ENCODE measurements at regions of chr17 and their contacts with region 1.

Region 1: GRCh38 chr17:45098869-45099616 is 33.3 kb downstream of the PLCD3 start:
- DNase-seq: peak; percentile 86 to 96 (median 95)
- ATAC-seq: peak; percentile 77 to 84
- H3K4me3 ChIP-seq: no peak overlapping the region
- H3K27ac ChIP-seq: no peak overlapping the region
- H3K4me1 ChIP-seq: peaks cover 4% of the 10 kb centered on the region
- H3K27me3 ChIP-seq: no peaks in the 10 kb centered on the region

Region 2: GRCh38 chr17:45031231-45032173 is 67.5 kb before region 1 on chr17:
- intact Hi-C with region 1: no loop called
- DNase-seq: no peak
- ATAC-seq: peak in 1 of 2 donors; percentile 23
- H3K4me3 ChIP-seq: no peak overlapping the region
- H3K27ac ChIP-seq: no peak overlapping the region
- H3K4me1 ChIP-seq: no peaks in the 10 kb centered on the region
- H3K27me3 ChIP-seq: no peaks in the 10 kb centered on the region

Region 3: DNA sequence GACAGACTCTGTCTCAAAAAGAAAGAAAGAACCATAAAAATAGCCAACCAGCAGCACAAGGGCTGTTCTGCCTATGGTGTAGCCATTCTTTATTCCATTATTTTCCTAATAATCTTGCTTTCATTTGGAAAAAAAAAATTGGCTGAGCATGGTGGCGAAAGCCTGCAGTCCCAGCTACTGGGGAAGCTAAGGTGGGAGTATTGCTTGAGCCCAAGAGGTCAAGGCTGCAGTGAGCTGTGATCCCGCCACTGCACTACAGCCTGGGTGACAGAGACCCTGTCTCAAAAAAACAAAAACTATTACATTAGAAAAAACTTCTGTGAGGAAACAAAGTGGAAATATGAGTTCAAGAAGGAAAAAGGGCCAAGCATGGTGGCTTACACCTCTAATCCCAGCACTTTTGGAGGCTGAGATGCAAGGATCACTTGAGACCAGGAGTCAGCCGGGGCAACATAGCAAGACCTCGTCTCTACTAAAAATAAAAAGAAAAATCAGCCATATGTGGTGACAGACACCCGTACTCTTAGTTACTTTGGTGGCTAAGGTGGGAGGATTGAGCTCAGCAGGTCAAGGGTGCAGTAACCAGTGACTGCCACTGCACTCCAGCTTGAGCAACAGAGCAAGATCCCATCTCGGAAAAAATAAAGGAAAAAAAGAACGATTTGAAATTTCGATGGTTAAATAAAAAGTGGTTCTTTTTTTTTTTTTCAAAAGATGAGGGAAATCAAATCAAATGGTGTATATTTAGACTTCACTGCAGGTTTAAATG is 50.1 kb before region 1 on chr17:
- intact Hi-C with region 1: loop called in 1 of 4 experiments (anchors 10 kb)
- DNase-seq: no peak
- ATAC-seq: no peak
- H3K4me3 ChIP-seq: no peak overlapping the region
- H3K27ac ChIP-seq: no peak overlapping the region
- H3K4me1 ChIP-seq: no peaks in the 10 kb centered on the region
- H3K27me3 ChIP-seq: no peaks in the 10 kb centered on the region

Region 4: GRCh38 chr17:45277216-45277849 is 178.3 kb after region 1 on chr17:
- intact Hi-C with region 1: no loop called
- DNase-seq: peak; percentile 96 to 99 (median 96)
- ATAC-seq: peak; percentile 75 to 77
- H3K4me3 ChIP-seq: no peak overlapping the region
- H3K27ac ChIP-seq: peak overlapping the region; percentile 90
- H3K4me1 ChIP-seq: peaks cover 6% of the 10 kb centered on the region
- H3K27me3 ChIP-seq: no peaks in the 10 kb centered on the region